Activated CD4-positive, alpha-beta T cell treated with anti-CD3 and anti-CD28 coated beads for 36 hours (primary cell): ENCODE measurements at regions of chr11 and their contacts with region 1.

Region 1: DNA sequence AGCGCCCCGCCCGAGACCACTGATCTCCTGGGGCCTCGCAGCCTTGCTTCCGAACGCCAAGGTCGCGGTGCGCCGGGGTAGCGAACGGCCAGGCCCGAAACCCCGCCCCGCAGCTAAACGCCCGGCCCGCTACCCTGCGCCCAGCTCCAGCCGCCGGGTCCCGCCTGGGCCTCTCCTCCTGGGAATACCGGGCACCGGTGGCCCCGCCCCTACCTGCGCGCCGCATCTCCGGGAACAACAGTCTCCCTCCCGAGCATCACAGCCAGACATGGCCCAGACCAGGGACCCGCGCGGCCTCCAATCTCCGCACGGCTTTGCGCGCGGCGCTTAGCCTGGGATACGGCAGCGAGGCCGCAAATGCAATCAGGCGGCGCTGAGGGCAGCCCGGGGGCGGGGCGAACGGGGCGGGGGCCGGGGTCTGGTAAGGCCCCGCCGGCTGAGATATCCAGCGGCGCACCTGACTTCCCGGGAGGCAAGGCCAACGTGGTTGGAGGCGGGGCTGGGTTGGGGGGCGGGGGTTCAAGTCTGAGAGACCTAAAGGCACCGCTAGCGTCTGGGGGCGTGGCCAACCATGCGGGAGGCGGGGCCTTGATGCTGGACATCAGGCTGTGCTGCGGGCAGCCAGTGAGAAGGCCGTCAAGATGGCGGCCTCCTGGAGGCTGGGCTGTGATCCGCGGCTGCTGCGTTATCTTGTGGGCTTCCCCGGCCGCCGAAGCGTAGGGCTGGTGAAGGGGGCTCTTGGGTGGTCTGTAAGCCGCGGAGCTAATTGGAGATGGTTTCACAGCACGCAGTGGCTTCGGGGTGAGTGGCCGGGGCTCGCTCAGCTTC is at the starts of genes APIP and PDHX:
- DNase-seq: peak; percentile 100
- ATAC-seq: peak; percentile 95
- H3K4me3 Mint-ChIP-seq: peak within 1 kb of the TSS; percentile 91
- H3K27ac Mint-ChIP-seq: peak within 1 kb of the TSS; percentile 95
- H3K4me1 Mint-ChIP-seq: peaks cover 40% of the 10 kb centered on the region
- H3K27me3 Mint-ChIP-seq: no peaks in the 10 kb centered on the region
- total RNA-seq, gene APIP: 43.6 to 43.7 TPM
- total RNA-seq, gene PDHX: 29.8 to 46.2 TPM

Region 2: GRCh38 chr11:34105079-34105956 is 810.9 kb before region 1 on chr11 and contains the start of gene NAT10:
- CTCF ChIA-PET with region 1: no interaction called
- POLR2A ChIA-PET with region 1: no interaction called
- intact Hi-C with region 1: loop called in 1 of 2 experiments (anchors 1 kb)
- DNase-seq: peak; percentile 98
- ATAC-seq: peak; percentile 93
- H3K4me3 Mint-ChIP-seq: peak within 1 kb of the TSS; percentile 97
- H3K27ac Mint-ChIP-seq: peak within 1 kb of the TSS; percentile 99
- H3K4me1 Mint-ChIP-seq: peaks cover 57% of the 10 kb centered on the region
- H3K27me3 Mint-ChIP-seq: no peaks in the 10 kb centered on the region
- total RNA-seq, gene NAT10: 142 to 147 TPM

Region 3: DNA sequence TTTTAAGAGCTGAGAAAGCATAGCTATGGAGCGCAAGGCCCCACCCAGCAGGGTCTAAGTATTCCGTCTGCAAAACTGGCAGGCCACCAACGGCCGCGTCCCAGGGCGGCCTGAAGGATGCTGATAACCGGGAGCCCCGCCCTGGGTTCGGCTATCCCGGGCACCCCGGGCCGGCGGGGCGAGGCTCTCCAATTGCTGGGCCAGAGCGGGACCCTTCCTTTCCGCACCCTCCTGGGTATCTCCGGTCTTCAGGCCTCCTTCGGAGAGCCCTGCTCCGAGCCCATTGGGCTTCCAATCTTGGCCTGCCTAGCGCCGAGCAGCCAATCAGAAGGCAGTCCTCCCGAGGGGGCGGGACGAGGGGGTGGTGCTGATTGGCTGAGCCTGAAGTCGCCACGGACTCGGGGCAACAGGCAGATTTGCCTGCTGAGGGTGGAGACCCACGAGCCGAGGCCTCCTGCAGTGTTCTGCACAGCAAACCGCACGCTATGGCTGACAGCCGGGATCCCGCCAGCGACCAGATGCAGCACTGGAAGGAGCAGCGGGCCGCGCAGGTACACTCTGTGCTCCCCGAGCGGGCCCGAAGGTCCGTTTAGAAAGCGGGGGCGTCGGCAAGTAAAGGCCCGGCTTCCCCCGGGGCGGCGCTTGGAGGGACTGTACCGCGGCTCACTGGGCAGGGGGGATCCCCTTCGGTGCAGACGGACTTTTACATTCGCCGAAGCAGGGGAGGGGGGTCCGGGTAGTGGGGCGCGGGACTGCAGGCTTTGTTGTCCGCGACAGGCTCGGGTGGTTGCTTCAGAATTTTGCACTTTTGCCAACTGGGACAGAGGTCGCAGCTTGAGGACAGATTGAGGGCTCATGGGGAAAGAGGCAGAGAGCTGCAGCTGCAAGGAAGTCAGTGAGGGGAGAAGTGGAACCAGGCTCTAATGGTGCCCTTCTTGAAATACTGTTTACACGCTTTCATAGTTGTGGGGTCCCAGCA is 477.4 kb before region 1 on chr11 and contains the start of gene CAT:
- CTCF ChIA-PET with region 1: no interaction called
- POLR2A ChIA-PET with region 1: no interaction called
- intact Hi-C with region 1: loop called in 1 of 2 experiments (anchors 1 kb)
- DNase-seq: peak; percentile 99
- ATAC-seq: peak; percentile 99
- H3K4me3 Mint-ChIP-seq: peak within 1 kb of the TSS; percentile 86
- H3K27ac Mint-ChIP-seq: peak within 1 kb of the TSS; percentile 93
- H3K4me1 Mint-ChIP-seq: peaks cover 22% of the 10 kb centered on the region
- H3K27me3 Mint-ChIP-seq: no peaks in the 10 kb centered on the region
- total RNA-seq, gene CAT: 25.1 to 25.5 TPM

Region 4: GRCh38 chr11:35040221-35040942 is 124.2 kb after region 1 on chr11:
- CTCF ChIA-PET with region 1: no interaction called
- POLR2A ChIA-PET with region 1: no interaction called
- intact Hi-C with region 1: loop called in 1 of 2 experiments (anchors 2 kb)
- DNase-seq: peak; percentile 78
- ATAC-seq: peak; percentile 86
- H3K4me3 Mint-ChIP-seq: peak overlapping the region; percentile 79
- H3K27ac Mint-ChIP-seq: peak overlapping the region; percentile 98
- H3K4me1 Mint-ChIP-seq: peaks cover 80% of the 10 kb centered on the region
- H3K27me3 Mint-ChIP-seq: peaks cover 2% of the 10 kb centered on the region

Region 5: DNA sequence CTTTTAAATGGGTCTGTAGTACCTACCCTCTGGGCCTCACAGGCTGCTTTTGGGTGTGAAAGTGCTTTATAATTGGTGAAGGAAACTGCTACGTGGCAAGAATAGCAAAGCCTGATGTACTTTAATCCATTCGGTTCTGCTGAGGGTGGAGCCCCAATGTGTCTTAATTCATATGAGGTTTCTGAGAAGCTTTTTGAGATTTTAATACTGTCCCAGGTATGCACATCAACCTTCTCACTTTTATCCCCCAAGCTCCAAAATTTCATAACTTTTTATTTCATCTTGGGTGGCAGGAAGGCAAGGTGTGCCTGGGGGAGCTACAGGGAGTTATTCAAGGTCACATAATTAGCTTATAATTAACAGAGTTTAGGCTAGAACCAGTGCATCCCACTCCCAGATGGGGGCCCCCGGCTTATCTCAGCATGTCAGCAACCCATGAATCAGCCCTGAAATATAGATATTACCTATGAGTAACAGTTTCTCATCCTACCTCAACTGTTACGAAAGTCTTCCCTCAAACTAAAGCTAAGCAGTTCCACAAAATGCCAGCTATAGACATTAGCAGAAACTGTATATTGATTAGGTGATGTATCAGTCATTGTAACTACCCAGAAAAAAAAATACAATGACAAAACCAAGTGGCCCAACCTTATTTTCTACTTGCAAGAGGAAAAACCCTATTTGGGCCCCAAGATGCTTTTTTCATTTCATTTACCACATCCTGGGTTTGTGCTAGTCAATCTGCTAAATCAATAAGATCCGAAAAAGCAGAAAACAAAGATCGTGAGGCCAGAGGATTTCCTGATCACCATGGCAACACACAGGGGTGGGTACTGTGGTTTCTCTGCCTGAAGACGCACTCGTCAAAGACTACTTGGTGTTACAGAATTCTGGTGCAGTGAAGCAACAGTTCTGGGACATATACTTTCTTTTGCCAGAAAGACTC is 249.5 kb after region 1 on chr11:
- CTCF ChIA-PET with region 1: no interaction called
- POLR2A ChIA-PET with region 1: no interaction called
- intact Hi-C with region 1: loop called in 1 of 2 experiments (anchors 5 kb)
- DNase-seq: peak; percentile 93
- ATAC-seq: peak; percentile 67
- H3K4me3 Mint-ChIP-seq: peak overlapping the region; percentile 64
- H3K27ac Mint-ChIP-seq: peak overlapping the region; percentile 98
- H3K4me1 Mint-ChIP-seq: peaks cover 100% of the 10 kb centered on the region
- H3K27me3 Mint-ChIP-seq: no peaks in the 10 kb centered on the region

Region 6: DNA sequence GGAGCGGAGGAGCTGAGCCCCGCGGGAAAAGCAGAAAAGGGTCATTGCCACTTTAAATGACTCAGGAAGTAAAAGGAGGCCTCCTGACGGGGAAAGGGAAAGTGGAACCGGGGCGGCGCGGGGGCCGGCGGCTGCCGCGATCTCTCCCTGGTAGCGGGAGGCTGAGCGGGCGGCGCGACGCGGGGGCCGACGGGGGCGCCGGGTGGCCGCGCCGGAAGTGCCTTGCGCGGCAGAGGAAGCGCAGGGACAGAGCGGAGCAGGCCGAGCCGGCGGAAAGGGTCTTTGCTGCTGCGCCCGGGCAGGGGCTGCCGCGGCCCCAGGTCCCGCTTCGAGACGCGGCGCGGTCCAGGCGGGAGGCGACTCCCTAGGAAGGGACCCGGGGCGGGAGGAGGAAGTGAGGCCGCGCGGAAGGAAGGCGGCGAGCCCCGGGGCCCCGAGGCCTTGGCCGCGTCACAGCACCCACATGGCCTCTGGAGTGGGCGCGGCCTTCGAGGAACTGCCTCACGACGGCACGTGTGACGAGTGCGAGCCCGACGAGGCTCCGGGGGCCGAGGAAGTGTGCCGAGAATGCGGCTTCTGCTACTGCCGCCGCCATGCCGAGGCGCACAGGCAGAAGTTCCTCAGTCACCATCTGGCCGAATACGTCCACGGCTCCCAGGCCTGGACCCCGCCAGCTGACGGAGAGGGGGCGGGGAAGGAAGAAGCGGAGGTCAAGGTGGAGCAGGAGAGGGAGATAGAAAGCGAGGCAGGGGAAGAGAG is 746.6 kb after region 1 on chr11 and contains the start of gene TRIM44:
- CTCF ChIA-PET with region 1: no interaction called
- POLR2A ChIA-PET with region 1: no interaction called
- intact Hi-C with region 1: loop called in 1 of 2 experiments (anchors 5 kb)
- DNase-seq: peak; percentile 92
- ATAC-seq: peak; percentile 86
- H3K4me3 Mint-ChIP-seq: peak within 1 kb of the TSS; percentile 83
- H3K27ac Mint-ChIP-seq: peak within 1 kb of the TSS; percentile 97
- H3K4me1 Mint-ChIP-seq: peaks cover 41% of the 10 kb centered on the region
- H3K27me3 Mint-ChIP-seq: peaks cover under 1% of the 10 kb centered on the region
- total RNA-seq, gene TRIM44: 38.1 to 39.9 TPM